ENCODE measurements at regions of chr10 and their contacts with region 1.

Region 1: GRCh38 chr10:130578532-130579289 is 442.5 kb downstream of the GLRX3 start:
- DNase-seq: no peak
- ATAC-seq: no peak
- H3K4me3 ChIP-seq: no peak overlapping the region
- H3K27ac ChIP-seq: no peak overlapping the region
- H3K4me1 ChIP-seq: no peaks in the 10 kb centered on the region
- H3K27me3 ChIP-seq: peaks cover 16% of the 10 kb centered on the region
- CTCF ChIP-seq: no peak

Region 2: DNA sequence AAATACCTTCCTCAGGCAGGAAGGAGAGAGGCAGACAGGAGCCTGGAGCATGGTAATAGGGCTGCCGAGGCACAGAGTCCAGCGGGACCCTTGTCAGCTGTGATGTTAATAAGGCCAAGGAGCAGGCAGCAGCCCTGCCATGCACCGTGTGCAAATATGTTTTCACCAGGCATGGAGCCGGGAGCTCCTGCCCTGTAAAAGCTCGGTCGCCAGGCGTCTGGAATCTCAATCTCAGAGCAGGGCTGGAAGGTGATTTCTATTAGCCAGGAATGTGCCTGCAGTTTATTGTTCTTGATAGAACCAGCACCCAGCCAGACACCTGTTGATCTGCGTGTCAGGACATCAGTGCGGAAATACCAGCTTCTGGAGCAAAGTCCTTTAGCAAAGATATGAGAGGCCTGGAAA is 27.3 kb after region 1 on chr10:
- CTCF ChIA-PET with region 1: no interaction called
- POLR2A ChIA-PET with region 1: interaction called, 14 read pairs
- in situ Hi-C with region 1: no loop called
- intact Hi-C with region 1: no loop called
- DNase-seq: no peak
- ATAC-seq: no peak
- H3K4me3 ChIP-seq: no peak overlapping the region
- H3K27ac ChIP-seq: no peak overlapping the region
- H3K4me1 ChIP-seq: no peaks in the 10 kb centered on the region
- H3K27me3 ChIP-seq: no peaks in the 10 kb centered on the region
- CTCF ChIP-seq: no peak

Measured in Panc1 (cell line).